Activated naive CD4-positive, alpha-beta T cell treated with anti-CD3 and anti-CD28 coated beads for 36 hours (primary cell): ENCODE measurements at regions of chr11 and their contacts with region 1.

Region 1: DNA sequence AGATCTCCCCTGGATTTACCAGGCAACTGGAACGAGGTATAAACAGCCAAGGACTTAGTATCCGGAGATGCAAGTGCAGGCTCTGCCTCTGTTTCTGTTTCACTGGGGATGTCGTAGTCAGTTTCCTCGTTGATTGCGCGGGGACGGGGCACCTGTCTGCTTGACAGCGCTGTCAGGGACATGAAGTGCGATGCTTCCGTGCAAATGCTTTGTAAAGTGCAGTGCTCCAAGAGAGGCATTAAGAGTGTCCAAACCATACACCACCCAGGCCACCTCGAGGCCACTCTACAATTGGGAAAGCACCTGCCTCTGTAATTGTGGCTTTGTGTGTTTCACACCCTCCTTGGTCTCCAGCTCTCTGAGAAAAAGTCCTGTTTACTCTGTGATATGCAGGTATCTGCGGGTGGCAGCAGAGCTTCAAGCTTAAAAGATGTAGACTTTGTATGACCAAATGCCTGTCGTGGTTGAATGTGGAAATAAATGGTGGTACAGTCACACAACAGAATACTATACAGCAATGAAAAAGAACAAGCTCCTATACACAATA is 18.6 kb upstream of the CD5 start:
- DNase-seq: peak; percentile 89
- H3K4me3 Mint-ChIP-seq: peak overlapping the region; percentile 76
- H3K27ac Mint-ChIP-seq: peak overlapping the region; percentile 99
- H3K4me1 Mint-ChIP-seq: peaks cover 70% of the 10 kb centered on the region
- H3K27me3 Mint-ChIP-seq: no peaks in the 10 kb centered on the region

Region 2: GRCh38 chr11:61021661-61022212 is 61.9 kb before region 1 on chr11:
- CTCF ChIA-PET with region 1: interaction called, 3 read pairs
- intact Hi-C with region 1: loop called (anchors 2 kb)
- DNase-seq: peak; percentile 97
- H3K4me3 Mint-ChIP-seq: peak overlapping the region; percentile 81
- H3K27ac Mint-ChIP-seq: peak overlapping the region; percentile 100
- H3K4me1 Mint-ChIP-seq: peaks cover 78% of the 10 kb centered on the region
- H3K27me3 Mint-ChIP-seq: no peaks in the 10 kb centered on the region

Region 3: DNA sequence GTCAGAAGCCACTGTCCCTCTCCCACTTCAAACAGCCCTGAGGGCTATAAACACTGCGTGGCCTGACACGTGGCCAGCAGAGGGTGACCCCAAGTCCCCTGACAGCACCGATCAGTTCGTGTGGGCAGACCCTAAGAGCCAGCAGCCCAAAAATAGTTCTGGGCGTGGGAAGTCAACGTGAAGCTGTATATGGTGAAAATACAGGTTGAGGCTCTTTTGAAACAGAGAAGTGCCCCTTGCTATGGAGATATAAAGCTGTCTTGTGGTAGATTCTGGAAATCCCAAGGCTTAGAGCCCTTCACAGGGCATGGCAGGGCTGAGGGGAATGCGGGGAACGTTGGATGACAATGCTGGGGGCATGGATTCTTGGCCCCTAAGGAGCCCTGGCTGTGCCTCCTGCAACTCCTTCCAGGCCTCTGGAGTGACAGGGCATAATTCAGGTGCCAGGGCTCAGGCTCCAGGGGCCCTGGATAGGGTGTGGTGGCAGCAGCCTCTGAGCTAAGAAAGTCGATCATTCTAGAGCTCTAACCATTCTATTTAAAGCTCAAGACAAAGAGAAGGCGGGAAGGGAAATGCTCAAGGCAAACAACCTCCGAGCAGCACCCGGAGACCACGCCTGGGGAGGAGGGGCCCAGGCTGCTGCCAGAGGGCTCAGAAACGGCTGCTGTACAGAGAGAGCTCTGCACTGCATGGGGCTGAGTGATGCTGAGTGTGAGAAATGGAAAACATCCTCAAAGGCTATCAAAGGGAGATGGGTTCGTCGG is 41.7 kb before region 1 on chr11:
- CTCF ChIA-PET with region 1: interaction called, 6 read pairs
- intact Hi-C with region 1: loop called (anchors 2 kb)
- DNase-seq: peak; percentile 93
- H3K4me3 Mint-ChIP-seq: peak overlapping the region; percentile 44
- H3K27ac Mint-ChIP-seq: peak overlapping the region; percentile 97
- H3K4me1 Mint-ChIP-seq: peaks cover 70% of the 10 kb centered on the region
- H3K27me3 Mint-ChIP-seq: no peaks in the 10 kb centered on the region

Region 4: GRCh38 chr11:61071208-61071681 is 12.4 kb before region 1 on chr11:
- CTCF ChIA-PET with region 1: interaction called, 21 read pairs
- intact Hi-C with region 1: loop called (anchors 1 kb)
- DNase-seq: peak; percentile 75
- H3K4me3 Mint-ChIP-seq: peak overlapping the region; percentile 28
- H3K27ac Mint-ChIP-seq: peak overlapping the region; percentile 93
- H3K4me1 Mint-ChIP-seq: peaks cover 86% of the 10 kb centered on the region
- H3K27me3 Mint-ChIP-seq: no peaks in the 10 kb centered on the region

Region 5: DNA sequence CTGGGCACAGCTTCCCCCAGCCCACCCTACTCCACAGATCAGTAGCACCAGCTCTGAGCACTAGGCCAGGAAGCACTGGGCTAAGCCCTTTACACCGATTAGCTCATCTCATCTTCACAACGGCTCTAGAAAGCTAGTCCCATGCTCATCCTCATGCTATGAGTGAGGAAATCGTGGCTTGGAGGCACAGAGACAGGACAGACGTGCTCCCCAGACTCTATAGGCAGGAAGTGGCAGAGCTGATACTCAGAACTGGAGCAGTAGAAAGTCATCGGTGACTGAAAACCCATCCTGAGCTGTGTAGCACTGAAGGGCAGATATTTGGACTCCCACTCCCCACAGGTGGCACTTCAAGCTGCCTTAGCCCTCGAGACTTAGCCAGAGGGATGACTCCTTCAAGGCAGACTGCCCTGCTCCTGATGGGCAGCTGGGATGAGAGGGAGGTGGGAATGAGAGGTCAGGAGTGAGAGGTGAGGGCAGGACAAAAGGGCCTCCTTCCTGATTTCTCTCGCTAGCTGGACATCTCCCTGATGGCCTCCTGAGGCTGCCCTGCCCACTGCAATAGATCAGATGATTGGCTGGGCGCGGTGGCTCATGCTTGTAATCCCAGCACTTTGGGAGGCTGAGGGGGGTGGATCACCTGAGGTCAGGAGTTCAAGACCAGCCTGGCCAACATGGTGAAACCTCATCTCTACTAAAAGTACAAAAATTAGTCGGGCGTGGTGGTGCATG is 28.3 kb after region 1 on chr11:
- CTCF ChIA-PET with region 1: interaction called, 62 read pairs
- intact Hi-C with region 1: loop called (anchors 2 kb)
- DNase-seq: peak; percentile 91
- H3K4me3 Mint-ChIP-seq: peak overlapping the region; percentile 71
- H3K27ac Mint-ChIP-seq: no peak overlapping the region
- H3K4me1 Mint-ChIP-seq: peaks cover 99% of the 10 kb centered on the region
- H3K27me3 Mint-ChIP-seq: no peaks in the 10 kb centered on the region

Region 6: GRCh38 chr11:61161190-61162091 is 77.8 kb after region 1 on chr11 and contains the start of gene VPS37C:
- CTCF ChIA-PET with region 1: interaction called, 3 read pairs
- intact Hi-C with region 1: loop called (anchors 2 kb)
- DNase-seq: peak; percentile 91
- H3K4me3 Mint-ChIP-seq: peak within 1 kb of the TSS; percentile 94
- H3K27ac Mint-ChIP-seq: peak within 1 kb of the TSS; percentile 93
- H3K4me1 Mint-ChIP-seq: peaks cover 62% of the 10 kb centered on the region
- H3K27me3 Mint-ChIP-seq: no peaks in the 10 kb centered on the region
- total RNA-seq, gene VPS37C: 8.5 to 8.9 TPM